Brain microvascular endothelial cell (primary cell): ENCODE measurements at regions of chr11 and their contacts with region 1.

Region 1: GRCh38 chr11:65497141-65498041 is 1.5 kb upstream of the MALAT1 start:
- DNase-seq: peak; percentile 97
- H3K4me3 ChIP-seq: peak overlapping the region; percentile 99
- H3K27ac ChIP-seq: peak overlapping the region; percentile 93
- H3K27me3 ChIP-seq: no peaks in the 10 kb centered on the region
- CTCF ChIP-seq: no peak

Region 2: DNA sequence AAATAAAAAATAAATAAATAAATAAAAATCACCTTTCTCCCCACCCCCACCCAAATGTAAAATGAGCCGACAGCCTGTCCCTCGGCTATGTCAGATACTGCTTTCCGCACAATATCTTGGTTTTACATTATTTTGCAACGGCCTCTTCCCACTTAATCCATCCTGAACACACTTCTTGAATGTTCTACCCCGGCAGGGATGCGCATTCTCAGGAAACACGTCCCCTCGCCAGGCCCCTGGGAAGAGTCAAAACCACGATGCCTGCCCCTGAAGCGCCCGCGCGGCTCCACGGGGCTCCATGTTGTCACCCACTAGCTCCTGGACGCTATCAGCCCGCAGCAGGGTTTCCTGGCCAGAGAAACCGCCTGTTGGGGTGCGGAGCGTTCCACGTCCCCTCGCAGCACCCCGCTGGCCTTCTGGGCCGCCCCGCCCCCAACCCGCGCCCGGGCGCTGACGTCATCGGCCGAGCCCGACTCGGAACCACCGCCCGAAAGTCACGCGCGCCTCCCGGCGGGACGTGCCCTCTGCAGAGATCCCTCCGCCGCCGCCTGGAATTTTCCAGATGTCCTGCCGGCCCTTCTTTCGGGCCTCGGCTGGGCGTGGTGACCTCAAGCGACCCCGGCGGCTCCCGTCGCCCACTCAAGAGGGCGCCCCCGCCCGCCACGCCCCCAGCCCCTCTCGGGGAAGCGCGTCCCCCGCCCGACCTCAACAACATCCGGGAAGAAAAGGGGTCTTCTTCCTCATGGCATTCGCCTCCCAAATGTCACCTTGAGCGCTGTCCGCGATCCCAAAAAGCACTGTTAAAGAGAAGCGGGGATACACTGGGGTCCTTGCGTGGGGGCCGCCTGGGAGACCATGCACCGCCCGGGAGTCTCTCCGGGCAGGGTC is 75.3 kb before region 1 on chr11:
- in situ Hi-C with region 1: loop called (anchors 5 kb)
- DNase-seq: peak; percentile 94
- H3K4me3 ChIP-seq: peak overlapping the region; percentile 96
- H3K27ac ChIP-seq: peak overlapping the region; percentile 100
- H3K27me3 ChIP-seq: no peaks in the 10 kb centered on the region
- CTCF ChIP-seq: no peak